ENCODE measurements at regions of chr7 and their contacts with region 1.

Region 1: DNA sequence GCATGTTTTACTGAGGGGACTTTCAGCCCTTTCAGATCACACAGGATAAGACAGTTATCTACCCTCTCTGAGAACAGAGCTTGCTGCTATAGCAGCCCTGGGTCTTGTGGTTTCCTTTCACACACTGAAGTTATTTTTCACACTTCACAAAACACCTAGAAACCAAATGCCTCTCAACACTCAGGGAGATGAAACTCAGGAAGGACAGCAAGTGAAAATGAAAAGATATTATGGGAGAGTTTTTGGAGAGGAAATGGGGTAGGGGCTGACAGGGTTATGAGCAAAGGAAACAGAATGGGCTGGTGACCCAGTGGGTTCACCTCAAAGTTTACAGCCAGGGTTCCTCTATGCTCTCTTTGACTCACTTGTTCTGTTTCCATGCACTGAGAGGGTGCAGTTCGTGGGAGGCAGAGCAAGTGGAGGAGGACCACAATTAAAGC is 17.0 kb upstream of the GIMAP2 start:
- DNase-seq: peak; percentile 80 to 88 (median 85)
- H3K4me3 ChIP-seq: peak overlapping the region; percentile 2 to 26
- H3K4me3 Mint-ChIP-seq: peak overlapping the region; percentile 55 to 84 (median 72)
- H3K27ac ChIP-seq: peak overlapping the region; percentile 68
- H3K27ac Mint-ChIP-seq: peak overlapping the region; percentile 82 to 99 (median 98)
- H3K4me1 ChIP-seq: peaks cover 92% of the 10 kb centered on the region
- H3K4me1 Mint-ChIP-seq: peaks cover 63 to 95% (median 79%) of the 10 kb centered on the region in 4 donors
- H3K27me3 ChIP-seq: no peaks in the 10 kb centered on the region
- H3K27me3 Mint-ChIP-seq: no peaks in the 10 kb centered on the region

Region 2: DNA sequence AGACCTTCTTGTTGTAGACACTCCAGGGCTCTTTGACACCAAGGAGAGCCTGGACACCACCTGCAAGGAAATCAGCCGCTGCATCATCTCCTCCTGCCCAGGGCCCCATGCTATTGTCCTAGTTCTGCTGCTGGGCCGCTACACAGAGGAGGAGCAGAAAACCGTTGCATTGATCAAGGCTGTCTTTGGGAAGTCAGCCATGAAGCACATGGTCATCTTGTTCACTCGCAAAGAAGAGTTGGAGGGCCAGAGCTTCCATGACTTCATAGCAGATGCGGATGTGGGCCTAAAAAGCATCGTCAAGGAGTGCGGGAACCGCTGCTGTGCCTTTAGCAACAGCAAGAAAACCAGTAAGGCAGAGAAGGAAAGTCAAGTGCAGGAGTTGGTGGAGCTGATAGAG is 148.3 kb before region 1 on chr7:
- CTCF ChIA-PET with region 1: interaction called, 5 read pairs
- POLR2A ChIA-PET with region 1: interaction called, 58 read pairs
- intact Hi-C with region 1: no loop called
- DNase-seq: peak in 1 of 5 donors; percentile 34
- H3K4me3 ChIP-seq: peak overlapping the region; percentile 61 to 74
- H3K4me3 Mint-ChIP-seq: peak overlapping the region; percentile 97 to 100 (median 99)
- H3K27ac ChIP-seq: peak overlapping the region; percentile 62
- H3K27ac Mint-ChIP-seq: peak overlapping the region; percentile 81 to 97 (median 92)
- H3K4me1 ChIP-seq: peaks cover 18% of the 10 kb centered on the region
- H3K4me1 Mint-ChIP-seq: peaks cover 21 to 50% (median 33%) of the 10 kb centered on the region in 4 donors
- H3K27me3 ChIP-seq: no peaks in the 10 kb centered on the region
- H3K27me3 Mint-ChIP-seq: no peaks in the 10 kb centered on the region

Region 3: DNA sequence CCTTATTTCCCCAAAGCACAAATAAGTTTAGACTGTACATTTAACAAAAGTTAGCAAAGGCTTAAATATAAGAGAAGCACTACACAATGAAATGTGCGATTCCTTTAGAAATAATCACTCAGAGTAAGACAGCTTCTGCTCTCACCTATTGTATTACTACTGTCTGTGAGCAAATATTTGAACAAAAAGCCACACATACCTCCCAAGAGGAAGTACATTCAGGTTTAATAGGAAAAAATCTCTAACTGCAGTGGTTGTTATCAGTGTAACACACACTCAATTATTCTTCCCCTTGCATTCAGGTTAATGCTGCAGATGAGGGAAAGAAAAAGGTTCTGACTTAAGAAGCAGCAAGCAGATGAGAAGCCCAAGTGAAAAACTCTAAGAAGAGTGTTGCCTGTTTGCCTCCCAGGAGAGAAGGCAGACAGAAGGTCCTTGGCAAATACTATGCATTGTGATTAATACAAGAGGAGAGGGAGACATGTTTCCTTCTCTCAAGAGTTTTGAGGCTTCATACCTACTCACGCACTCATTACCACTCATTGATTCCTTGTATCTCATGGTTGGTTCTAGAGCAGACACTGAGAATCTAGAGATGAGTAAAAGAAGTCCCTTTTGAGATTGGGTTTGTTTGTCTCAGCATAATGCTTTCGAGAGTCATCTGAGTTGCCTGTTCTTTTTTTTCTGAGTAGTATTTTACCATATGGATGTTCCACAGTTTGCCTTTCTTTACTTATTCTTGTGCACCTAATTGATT is 87.7 kb before region 1 on chr7:
- CTCF ChIA-PET with region 1: no interaction called
- POLR2A ChIA-PET with region 1: interaction called, 3 read pairs
- intact Hi-C with region 1: loop called (anchors 5 kb)
- DNase-seq: no peak
- H3K4me3 ChIP-seq: no peak overlapping the region
- H3K4me3 Mint-ChIP-seq: peak overlapping the region in 3 of 8 donors; percentile 26 to 33 (median 33)
- H3K27ac ChIP-seq: no peak overlapping the region
- H3K27ac Mint-ChIP-seq: peak overlapping the region; percentile 47 to 85 (median 68)
- H3K4me1 ChIP-seq: peaks cover 14% of the 10 kb centered on the region
- H3K4me1 Mint-ChIP-seq: peaks cover 22 to 81% (median 36%) of the 10 kb centered on the region in 4 donors
- H3K27me3 ChIP-seq: no peaks in the 10 kb centered on the region
- H3K27me3 Mint-ChIP-seq: no peaks in the 10 kb centered on the region

Region 4: DNA sequence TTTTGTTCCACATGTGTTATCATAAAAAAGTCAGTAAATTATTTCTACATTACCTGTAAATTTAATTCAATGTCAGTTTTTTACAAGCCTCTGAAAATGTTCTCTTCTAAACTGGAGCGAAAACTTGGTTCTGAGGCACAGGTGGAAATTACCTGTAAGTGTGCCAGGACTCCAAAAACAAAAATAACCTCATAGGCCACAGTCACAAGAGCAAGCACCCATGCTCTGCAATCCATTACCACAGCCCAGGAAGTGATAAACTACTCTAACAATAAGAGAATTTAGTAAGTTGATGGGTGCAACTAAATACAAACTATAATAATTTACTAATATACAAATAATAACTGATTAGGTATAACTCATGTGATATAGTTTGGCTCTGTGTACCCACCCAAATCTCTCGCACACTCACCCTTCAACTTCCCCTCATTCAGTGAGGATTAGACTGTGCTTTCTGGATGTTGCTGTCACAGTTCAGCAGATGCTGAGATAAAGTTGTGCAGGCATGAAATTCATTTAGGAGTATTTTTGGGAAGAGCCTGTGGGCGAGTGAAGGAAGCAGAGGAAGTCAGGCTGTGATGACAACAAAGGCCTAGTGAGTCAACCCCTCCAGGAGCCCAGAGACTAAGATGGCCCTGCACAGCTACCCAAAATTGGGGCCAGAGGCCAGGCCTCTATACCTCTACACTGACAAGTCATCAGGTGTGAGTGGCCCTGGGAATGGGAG is 20.0 kb before region 1 on chr7:
- CTCF ChIA-PET with region 1: interaction called, 3 read pairs
- POLR2A ChIA-PET with region 1: interaction called, 16 read pairs
- intact Hi-C with region 1: no loop called
- DNase-seq: peak in 4 of 5 donors; percentile 34 to 56 (median 50)
- H3K4me3 ChIP-seq: no peak overlapping the region
- H3K4me3 Mint-ChIP-seq: peak overlapping the region; percentile 18 to 76 (median 64)
- H3K27ac ChIP-seq: peak overlapping the region; percentile 3
- H3K27ac Mint-ChIP-seq: peak overlapping the region; percentile 9 to 89 (median 82)
- H3K4me1 ChIP-seq: peaks cover 45% of the 10 kb centered on the region
- H3K4me1 Mint-ChIP-seq: peaks cover 33 to 73% (median 53%) of the 10 kb centered on the region in 4 donors
- H3K27me3 ChIP-seq: no peaks in the 10 kb centered on the region
- H3K27me3 Mint-ChIP-seq: no peaks in the 10 kb centered on the region

Region 5: DNA sequence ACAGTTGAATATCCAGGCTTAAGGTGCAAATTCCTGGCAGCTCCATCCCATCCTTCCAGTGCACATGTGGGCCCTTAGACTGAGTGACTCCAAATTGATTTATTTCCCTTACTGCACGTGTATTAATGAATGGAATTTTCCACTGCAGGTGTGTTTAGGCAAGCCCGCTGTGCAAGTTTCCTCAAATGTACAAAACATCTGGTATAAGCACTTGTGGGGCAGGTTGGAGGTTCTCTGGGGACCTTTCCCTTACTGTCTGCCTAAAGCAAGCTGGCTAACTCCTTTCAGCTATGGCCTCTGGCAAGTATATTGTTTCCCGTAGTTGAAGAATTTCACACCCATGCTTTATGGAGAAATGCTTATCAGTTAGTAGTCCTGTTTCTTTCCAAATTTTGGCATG is 11.0 kb before region 1 on chr7:
- CTCF ChIA-PET with region 1: no interaction called
- POLR2A ChIA-PET with region 1: interaction called, 26 read pairs
- intact Hi-C with region 1: no loop called
- DNase-seq: no peak
- H3K4me3 ChIP-seq: no peak overlapping the region
- H3K4me3 Mint-ChIP-seq: peak overlapping the region in 3 of 8 donors; percentile 14 to 44 (median 15)
- H3K27ac ChIP-seq: no peak overlapping the region
- H3K27ac Mint-ChIP-seq: peak overlapping the region in 1 of 7 donors; percentile 56
- H3K4me1 ChIP-seq: peaks cover 15% of the 10 kb centered on the region
- H3K4me1 Mint-ChIP-seq: peaks cover 30 to 71% (median 36%) of the 10 kb centered on the region in 4 donors
- H3K27me3 ChIP-seq: no peaks in the 10 kb centered on the region
- H3K27me3 Mint-ChIP-seq: no peaks in the 10 kb centered on the region

Region 6: GRCh38 chr7:150731916-150732315 is 63.4 kb after region 1 on chr7:
- CTCF ChIA-PET with region 1: interaction called, 3 read pairs
- POLR2A ChIA-PET with region 1: interaction called, 50 read pairs
- intact Hi-C with region 1: loop called (anchors 5 kb)
- DNase-seq: no peak
- H3K4me3 ChIP-seq: no peak overlapping the region
- H3K4me3 Mint-ChIP-seq: peak overlapping the region; percentile 9 to 95 (median 64)
- H3K27ac ChIP-seq: peak overlapping the region; percentile 6
- H3K27ac Mint-ChIP-seq: peak overlapping the region; percentile 86 to 97 (median 91)
- H3K4me1 ChIP-seq: peaks cover 76% of the 10 kb centered on the region
- H3K4me1 Mint-ChIP-seq: peaks cover 71 to 87% (median 76%) of the 10 kb centered on the region in 4 donors
- H3K27me3 ChIP-seq: no peaks in the 10 kb centered on the region
- H3K27me3 Mint-ChIP-seq: no peaks in the 10 kb centered on the region

Region 7: DNA sequence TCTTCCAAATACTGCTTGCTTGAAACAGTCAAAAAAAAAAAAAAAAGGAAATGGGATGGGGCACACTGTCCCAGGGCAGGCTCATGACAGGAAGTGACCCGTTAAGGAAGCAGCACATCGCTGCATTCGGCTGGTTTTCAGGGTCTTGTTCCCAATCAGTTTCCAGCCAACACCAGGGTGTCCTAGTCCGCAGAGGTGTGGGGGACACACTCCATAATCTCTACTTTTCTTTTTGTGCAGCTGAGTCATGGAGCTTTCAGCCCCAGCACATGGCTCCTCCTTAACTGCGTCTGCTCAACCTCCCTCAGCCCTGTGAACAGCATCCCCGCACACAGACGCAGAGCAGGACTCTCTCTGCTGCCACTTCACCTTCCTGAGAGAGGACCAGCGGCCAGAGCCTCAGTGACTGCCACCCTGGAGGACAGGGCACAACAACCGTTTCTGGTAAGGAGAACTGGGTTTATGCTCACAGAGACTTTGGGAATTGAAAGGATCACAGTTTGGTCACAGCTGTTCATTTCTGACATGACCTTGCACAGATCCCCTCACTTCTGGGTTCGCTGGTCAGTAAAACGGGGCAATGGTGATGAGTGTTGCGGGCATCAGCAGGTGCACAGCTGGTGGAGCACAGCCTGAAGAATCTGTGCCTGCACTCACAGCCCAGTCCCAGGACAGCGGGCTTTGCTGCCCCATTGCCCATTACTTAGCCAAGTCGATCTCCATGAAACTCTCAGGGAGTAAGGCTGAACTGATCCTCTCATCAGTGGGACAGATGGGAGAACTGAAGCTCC is 69.0 kb after region 1 on chr7 and contains the start of gene GIMAP5:
- CTCF ChIA-PET with region 1: interaction called, 15 read pairs
- POLR2A ChIA-PET with region 1: interaction called, 149 read pairs
- intact Hi-C with region 1: loop called (anchors 5 kb)
- DNase-seq: peak in 4 of 5 donors; percentile 58 to 74 (median 61)
- H3K4me3 ChIP-seq: peak within 1 kb of the TSS; percentile 81 to 82
- H3K4me3 Mint-ChIP-seq: peak within 1 kb of the TSS; percentile 92 to 100 (median 98)
- H3K27ac ChIP-seq: peak within 1 kb of the TSS; percentile 83
- H3K27ac Mint-ChIP-seq: peak within 1 kb of the TSS; percentile 86 to 98 (median 96)
- H3K4me1 ChIP-seq: peaks cover 64% of the 10 kb centered on the region
- H3K4me1 Mint-ChIP-seq: peaks cover 55 to 94% (median 64%) of the 10 kb centered on the region in 4 donors
- H3K27me3 ChIP-seq: no peaks in the 10 kb centered on the region
- H3K27me3 Mint-ChIP-seq: no peaks in the 10 kb centered on the region
- total RNA-seq, gene GIMAP5: 296 to 297 TPM

Region 8: DNA sequence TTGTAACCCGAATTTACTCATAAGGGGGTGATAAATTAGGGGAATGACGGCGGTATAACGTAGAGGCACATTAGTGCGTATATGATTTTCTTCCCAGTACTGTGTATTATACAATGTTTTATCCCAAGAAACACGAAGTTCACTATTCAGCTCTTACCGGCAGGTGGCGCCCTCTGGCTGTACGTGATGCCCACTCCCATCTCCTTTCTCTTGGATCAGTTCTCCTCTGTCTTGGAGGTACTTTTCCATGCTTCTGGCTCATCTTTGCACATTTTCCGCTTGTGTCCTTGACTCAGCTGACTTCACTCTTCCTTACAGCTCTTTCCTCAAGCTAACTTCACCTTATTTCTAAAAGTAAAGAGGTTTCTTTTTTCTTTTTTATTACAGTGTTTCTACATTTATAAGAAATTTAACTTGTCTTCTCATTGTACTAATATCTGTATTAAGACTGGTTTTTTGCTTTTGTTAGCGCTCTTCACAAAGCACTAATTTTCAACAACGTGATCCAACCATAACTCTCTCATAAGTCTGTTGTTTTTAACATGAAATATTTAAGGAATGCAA is 110.3 kb after region 1 on chr7:
- CTCF ChIA-PET with region 1: no interaction called
- POLR2A ChIA-PET with region 1: no interaction called
- intact Hi-C with region 1: no loop called
- DNase-seq: peak; percentile 53 to 61 (median 57)
- H3K4me3 ChIP-seq: no peak overlapping the region
- H3K4me3 Mint-ChIP-seq: no peak overlapping the region
- H3K27ac ChIP-seq: no peak overlapping the region
- H3K27ac Mint-ChIP-seq: no peak overlapping the region
- H3K4me1 ChIP-seq: no peaks in the 10 kb centered on the region
- H3K4me1 Mint-ChIP-seq: peaks cover 0 to 5% (median 5%) of the 10 kb centered on the region in 4 donors
- H3K27me3 ChIP-seq: no peaks in the 10 kb centered on the region
- H3K27me3 Mint-ChIP-seq: peaks cover 0 to 6% of the 10 kb centered on the region in 2 donors